Naive thymus-derived CD4-positive, alpha-beta T cell (primary cell): ENCODE measurements at regions of chr6 and their contacts with region 1.

Region 1: DNA sequence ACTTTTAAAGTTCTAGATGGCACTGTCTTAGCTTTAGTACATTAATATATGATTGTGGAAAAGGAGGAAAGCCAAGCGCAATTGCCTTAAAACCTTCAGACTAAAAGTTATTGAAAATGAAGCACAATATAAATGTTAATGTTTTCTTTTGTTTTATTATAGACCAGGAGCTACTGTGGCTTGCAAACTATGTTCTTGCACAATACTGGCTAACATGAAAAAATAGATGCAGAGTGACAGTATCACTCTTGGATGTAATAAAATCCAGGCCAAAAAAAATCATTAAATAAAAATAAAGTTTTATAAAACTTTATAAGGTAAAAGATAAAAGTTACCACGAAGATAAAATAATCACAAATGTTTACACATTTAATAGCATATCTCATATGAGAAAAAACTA is 18.3 kb upstream of the PLN start:
- DNase-seq: no peak
- ATAC-seq: no peak
- H3K4me3 ChIP-seq: no peak overlapping the region
- H3K4me3 Mint-ChIP-seq: no peak overlapping the region
- H3K27ac ChIP-seq: no peak overlapping the region
- H3K27ac Mint-ChIP-seq: peak overlapping the region in 1 of 9 donors; percentile 11
- H3K4me1 ChIP-seq: no peaks in the 10 kb centered on the region
- H3K4me1 Mint-ChIP-seq: peaks cover 13 to 85% (median 73%) of the 10 kb centered on the region in 7 donors
- H3K27me3 ChIP-seq: no peaks in the 10 kb centered on the region
- H3K27me3 Mint-ChIP-seq: no peaks in the 10 kb centered on the region

Region 2: GRCh38 chr6:118280210-118280609 is 249.5 kb before region 1 on chr6:
- CTCF ChIA-PET with region 1: no interaction called
- POLR2A ChIA-PET with region 1: no interaction called
- intact Hi-C with region 1: no loop called
- DNase-seq: no peak
- ATAC-seq: no peak
- H3K4me3 ChIP-seq: no peak overlapping the region
- H3K4me3 Mint-ChIP-seq: no peak overlapping the region
- H3K27ac ChIP-seq: no peak overlapping the region
- H3K27ac Mint-ChIP-seq: no peak overlapping the region
- H3K4me1 ChIP-seq: no peaks in the 10 kb centered on the region
- H3K4me1 Mint-ChIP-seq: peaks cover 0 to 7% (median 0%) of the 10 kb centered on the region in 7 donors
- H3K27me3 ChIP-seq: no peaks in the 10 kb centered on the region
- H3K27me3 Mint-ChIP-seq: peaks cover 10 to 45% (median 22%) of the 10 kb centered on the region in 5 donors

Region 3: DNA sequence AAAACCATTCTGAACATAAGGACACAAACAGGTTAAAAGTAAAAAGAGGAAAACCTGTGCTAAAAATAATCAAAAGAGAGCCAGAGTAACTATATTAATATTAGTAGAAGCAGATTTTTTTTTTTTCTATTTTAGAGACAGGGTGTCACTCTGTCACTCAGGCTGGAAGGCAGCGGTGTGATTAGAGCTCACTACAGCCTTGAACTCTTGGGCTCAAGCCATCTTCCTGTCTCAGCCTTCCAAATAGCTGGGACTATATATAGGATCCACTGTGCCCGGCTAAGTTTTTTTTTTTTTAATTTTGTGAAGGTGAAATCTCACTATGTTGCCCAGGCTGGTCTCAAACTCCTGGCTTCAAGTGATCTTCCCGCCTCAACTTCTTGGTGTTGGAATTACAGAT is 15.1 kb before region 1 on chr6:
- CTCF ChIA-PET with region 1: interaction called, 4 read pairs
- POLR2A ChIA-PET with region 1: no interaction called
- intact Hi-C with region 1: loop called in 1 of 2 experiments (anchors 2 kb)
- DNase-seq: no peak
- ATAC-seq: no peak
- H3K4me3 ChIP-seq: no peak overlapping the region
- H3K4me3 Mint-ChIP-seq: peak overlapping the region in 1 of 10 donors; percentile 20
- H3K27ac ChIP-seq: no peak overlapping the region
- H3K27ac Mint-ChIP-seq: peak overlapping the region in 2 of 9 donors; percentile 10 to 11
- H3K4me1 ChIP-seq: no peaks in the 10 kb centered on the region
- H3K4me1 Mint-ChIP-seq: peaks cover 5 to 78% (median 66%) of the 10 kb centered on the region in 7 donors
- H3K27me3 ChIP-seq: no peaks in the 10 kb centered on the region
- H3K27me3 Mint-ChIP-seq: no peaks in the 10 kb centered on the region

Region 4: GRCh38 chr6:119915971-119916370 is 1386.2 kb after region 1 on chr6:
- CTCF ChIA-PET with region 1: no interaction called
- POLR2A ChIA-PET with region 1: no interaction called
- intact Hi-C with region 1: no loop called
- DNase-seq: no peak
- ATAC-seq: no peak
- H3K4me3 ChIP-seq: no peak overlapping the region
- H3K4me3 Mint-ChIP-seq: no peak overlapping the region
- H3K27ac ChIP-seq: no peak overlapping the region
- H3K27ac Mint-ChIP-seq: no peak overlapping the region
- H3K4me1 ChIP-seq: no peaks in the 10 kb centered on the region
- H3K4me1 Mint-ChIP-seq: no peaks in the 10 kb centered on the region
- H3K27me3 ChIP-seq: no peaks in the 10 kb centered on the region
- H3K27me3 Mint-ChIP-seq: no peaks in the 10 kb centered on the region